ENCODE measurements at regions of chrX and their contacts with region 1.

Region 1: DNA sequence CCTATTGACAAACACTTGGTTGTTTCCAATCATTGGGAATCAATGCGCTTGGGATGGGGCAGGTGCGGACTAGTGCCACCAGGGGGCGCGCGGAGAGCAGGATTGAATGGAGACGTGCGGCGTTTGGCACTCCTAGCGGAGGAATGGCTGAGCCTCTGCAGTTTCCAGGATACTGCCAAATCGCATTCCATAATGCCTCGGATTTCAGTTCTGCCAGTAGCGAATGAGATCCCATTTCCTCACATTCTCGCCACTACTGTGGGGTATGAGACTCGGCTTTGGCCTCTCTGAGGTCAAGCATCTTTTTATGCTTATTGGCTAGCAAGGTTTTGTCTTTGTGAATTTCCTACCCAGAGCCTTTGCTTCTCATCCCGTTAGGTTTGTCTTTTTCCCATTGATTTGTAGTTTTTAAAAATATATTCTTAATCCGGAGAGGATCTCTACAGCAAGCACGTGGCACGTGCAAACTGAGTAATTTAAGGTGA is 28.7 kb downstream of the CLDN34 start:
- DNase-seq: peak; percentile 68 to 97 (median 85)

Region 2: GRCh38 chrX:9885150-9885549 is 110.7 kb before region 1 on chrX:
- intact Hi-C with region 1: loop called (anchors 5 kb)
- DNase-seq: peak; percentile 39 to 95 (median 72)

Region 3: GRCh38 chrX:10884246-10884645 is 888.3 kb after region 1 on chrX:
- intact Hi-C with region 1: no loop called
- DNase-seq: no peak

Measured in posterior cingulate gyrus (tissue), 11 donors.